ENCODE measurements at regions of chr7 and their contacts with region 1.

Region 1: GRCh38 chr7:111650412-111650999 is 88.2 kb upstream of the IMMP2L start:
- DNase-seq: no peak
- ATAC-seq: no peak
- H3K4me3 ChIP-seq: no peak overlapping the region
- H3K4me3 Mint-ChIP-seq: no peak overlapping the region
- H3K27ac ChIP-seq: no peak overlapping the region
- H3K27ac Mint-ChIP-seq: no peak overlapping the region
- H3K4me1 ChIP-seq: no peaks in the 10 kb centered on the region
- H3K4me1 Mint-ChIP-seq: no peaks in the 10 kb centered on the region
- H3K27me3 ChIP-seq: no peaks in the 10 kb centered on the region
- H3K27me3 Mint-ChIP-seq: no peaks in the 10 kb centered on the region
- CTCF ChIP-seq: no peak

Region 2: GRCh38 chr7:111639934-111640333 is 10.6 kb before region 1 on chr7:
- intact Hi-C with region 1: loop called (anchors 1 kb)
- DNase-seq: no peak
- ATAC-seq: no peak
- H3K4me3 ChIP-seq: no peak overlapping the region
- H3K4me3 Mint-ChIP-seq: no peak overlapping the region
- H3K27ac ChIP-seq: no peak overlapping the region
- H3K27ac Mint-ChIP-seq: no peak overlapping the region
- H3K4me1 ChIP-seq: no peaks in the 10 kb centered on the region
- H3K4me1 Mint-ChIP-seq: no peaks in the 10 kb centered on the region
- H3K27me3 ChIP-seq: no peaks in the 10 kb centered on the region
- H3K27me3 Mint-ChIP-seq: no peaks in the 10 kb centered on the region
- CTCF ChIP-seq: no peak

Region 3: GRCh38 chr7:111682588-111683340 is 32.3 kb after region 1 on chr7:
- intact Hi-C with region 1: no loop called
- DNase-seq: no peak
- ATAC-seq: no peak
- H3K4me3 ChIP-seq: no peak overlapping the region
- H3K4me3 Mint-ChIP-seq: no peak overlapping the region
- H3K27ac ChIP-seq: no peak overlapping the region
- H3K27ac Mint-ChIP-seq: no peak overlapping the region
- H3K4me1 ChIP-seq: no peaks in the 10 kb centered on the region
- H3K4me1 Mint-ChIP-seq: no peaks in the 10 kb centered on the region
- H3K27me3 ChIP-seq: no peaks in the 10 kb centered on the region
- H3K27me3 Mint-ChIP-seq: no peaks in the 10 kb centered on the region
- CTCF ChIP-seq: no peak

Region 4: GRCh38 chr7:111727905-111728634 is 77.6 kb after region 1 on chr7:
- intact Hi-C with region 1: no loop called
- DNase-seq: no peak
- ATAC-seq: no peak
- H3K4me3 ChIP-seq: no peak overlapping the region
- H3K4me3 Mint-ChIP-seq: no peak overlapping the region
- H3K27ac ChIP-seq: no peak overlapping the region
- H3K27ac Mint-ChIP-seq: no peak overlapping the region
- H3K4me1 ChIP-seq: no peaks in the 10 kb centered on the region
- H3K4me1 Mint-ChIP-seq: no peaks in the 10 kb centered on the region
- H3K27me3 ChIP-seq: no peaks in the 10 kb centered on the region
- H3K27me3 Mint-ChIP-seq: no peaks in the 10 kb centered on the region
- CTCF ChIP-seq: no peak

Measured in natural killer cell (primary cell).